ENCODE measurements at regions of chr6 and their contacts with region 1.

Region 1: GRCh38 chr6:165662749-165663282 is at the start of gene PDE10A:
- DNase-seq: peak; percentile 76 to 79
- ATAC-seq: peak; percentile 41 to 82 (median 72)
- H3K4me3 ChIP-seq: peak within 1 kb of the TSS; percentile 72 to 96 (median 90)
- H3K27ac ChIP-seq: peak within 1 kb of the TSS; percentile 85 to 98 (median 93)
- H3K4me1 ChIP-seq: peaks cover 0 to 37% (median 23%) of the 10 kb centered on the region in 9 donors
- H3K27me3 ChIP-seq: peaks cover 0 to 75% (median 36%) of the 10 kb centered on the region in 7 donors
- CTCF ChIP-seq: peak in 4 of 9 donors; percentile 5 to 31 (median 21)
- total RNA-seq, gene PDE10A: 10.0 to 20.4 (median 14.9) TPM

Region 2: DNA sequence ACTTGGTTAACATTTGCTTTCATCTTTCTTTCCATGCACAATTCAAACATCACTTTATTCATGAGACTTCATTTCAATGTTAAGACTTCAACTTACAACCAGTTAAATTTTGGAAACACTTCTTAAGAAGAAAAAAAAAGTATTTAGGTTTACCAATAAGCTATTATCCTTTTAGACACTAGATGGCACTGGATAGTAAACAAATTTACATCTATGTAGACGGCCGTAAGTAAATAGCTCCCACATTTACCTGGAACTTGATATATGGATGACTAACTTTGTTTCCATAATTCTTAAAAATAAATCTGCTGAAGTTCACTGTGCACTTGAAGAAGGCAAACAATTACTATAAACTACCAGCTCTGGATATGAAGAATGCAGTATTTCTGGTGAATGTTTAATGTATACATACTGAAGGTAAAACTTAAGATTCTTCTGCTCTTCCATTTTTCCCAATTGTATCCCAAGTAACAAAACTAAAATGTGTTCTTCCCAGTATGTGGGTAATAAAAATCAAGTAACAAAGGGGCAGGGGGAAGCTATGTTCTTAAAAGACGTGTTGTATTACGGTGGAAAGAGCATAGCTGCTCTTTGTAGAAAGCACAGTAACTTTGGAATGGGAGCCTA is 222.8 kb before region 1 on chr6:
- intact Hi-C with region 1: loop called in 8 of 10 experiments (anchors 2 to 10 kb)
- DNase-seq: no peak
- ATAC-seq: peak in 3 of 8 donors; percentile 44 to 69 (median 62)
- H3K4me3 ChIP-seq: no peak overlapping the region
- H3K27ac ChIP-seq: no peak overlapping the region
- H3K4me1 ChIP-seq: no peaks in the 10 kb centered on the region
- H3K27me3 ChIP-seq: no peaks in the 10 kb centered on the region
- CTCF ChIP-seq: peak; percentile 34 to 81 (median 70)

Region 3: GRCh38 chr6:165456286-165456685 is 206.5 kb before region 1 on chr6:
- intact Hi-C with region 1: loop called in 1 of 10 experiments (anchors 10 kb)
- DNase-seq: no peak
- ATAC-seq: no peak
- H3K4me3 ChIP-seq: no peak overlapping the region
- H3K27ac ChIP-seq: peak overlapping the region in 1 of 10 donors; percentile 31
- H3K4me1 ChIP-seq: peaks cover 0 to 41% (median 9%) of the 10 kb centered on the region in 9 donors
- H3K27me3 ChIP-seq: no peaks in the 10 kb centered on the region
- CTCF ChIP-seq: no peak

Region 4: GRCh38 chr6:165573671-165574070 is 89.1 kb before region 1 on chr6:
- intact Hi-C with region 1: loop called in 2 of 10 experiments (anchors 5 kb)
- DNase-seq: peak; percentile 57 to 85
- ATAC-seq: peak; percentile 88 to 99 (median 96)
- H3K4me3 ChIP-seq: no peak overlapping the region
- H3K27ac ChIP-seq: peak overlapping the region in 8 of 10 donors; percentile 18 to 72 (median 35)
- H3K4me1 ChIP-seq: peaks cover 0 to 51% (median 26%) of the 10 kb centered on the region in 9 donors
- H3K27me3 ChIP-seq: no peaks in the 10 kb centered on the region
- CTCF ChIP-seq: peak in 2 of 9 donors; percentile 17 to 31

Region 5: DNA sequence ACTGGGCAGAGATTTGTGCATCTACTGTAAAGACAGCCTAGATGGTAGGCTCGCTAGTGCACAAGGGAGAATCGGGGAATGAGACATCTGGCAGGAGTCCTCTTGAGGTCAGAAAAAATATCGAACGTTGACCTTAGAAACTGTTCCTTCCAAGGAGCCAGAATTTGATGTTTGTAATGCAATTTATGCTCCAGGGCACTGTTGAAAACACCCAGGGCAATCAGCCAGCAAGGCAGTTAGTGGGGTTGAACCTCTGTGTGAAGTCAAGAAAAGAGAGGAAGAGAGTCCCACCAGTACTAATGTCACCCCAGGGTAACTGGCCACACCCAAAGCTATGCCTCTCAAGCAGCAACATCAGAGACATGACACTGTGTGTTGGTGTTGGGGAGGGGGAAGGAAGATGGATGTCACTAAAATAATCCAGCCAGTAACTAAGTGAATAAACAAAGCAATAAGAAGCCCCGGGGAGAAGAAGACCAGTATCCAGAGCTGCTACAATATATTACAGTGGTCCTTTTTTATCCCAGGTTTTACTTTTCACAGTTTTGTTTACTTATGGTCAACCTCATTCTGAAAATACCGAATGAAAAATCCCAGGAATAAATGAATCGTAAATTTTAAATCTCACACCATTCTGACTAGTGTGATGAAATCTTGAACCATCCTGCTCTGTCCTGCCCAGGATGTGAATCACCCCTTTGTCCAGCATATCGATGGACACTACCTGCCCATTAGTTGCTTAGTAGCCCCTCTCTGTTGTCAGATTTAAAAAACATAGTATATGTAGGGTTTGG is 33.1 kb after region 1 on chr6:
- intact Hi-C with region 1: loop called in 3 of 10 experiments (anchors 2 to 5 kb)
- DNase-seq: no peak
- ATAC-seq: no peak
- H3K4me3 ChIP-seq: no peak overlapping the region
- H3K27ac ChIP-seq: peak overlapping the region in 3 of 10 donors; percentile 3 to 70 (median 11)
- H3K4me1 ChIP-seq: peaks cover 0 to 31% (median 6%) of the 10 kb centered on the region in 9 donors
- H3K27me3 ChIP-seq: no peaks in the 10 kb centered on the region
- CTCF ChIP-seq: no peak

Region 6: GRCh38 chr6:165774903-165775601 is 112.2 kb after region 1 on chr6:
- intact Hi-C with region 1: loop called in 1 of 10 experiments (anchors 5 kb)
- DNase-seq: peak in 1 of 2 donors; percentile 86
- ATAC-seq: peak; percentile 86 to 99 (median 97)
- H3K4me3 ChIP-seq: peak overlapping the region in 1 of 10 donors; percentile 8
- H3K27ac ChIP-seq: peak overlapping the region in 9 of 10 donors; percentile 50 to 80 (median 72)
- H3K4me1 ChIP-seq: peaks cover 0 to 40% (median 6%) of the 10 kb centered on the region in 9 donors
- H3K27me3 ChIP-seq: no peaks in the 10 kb centered on the region
- CTCF ChIP-seq: no peak